CD8-positive, alpha-beta memory T cell (primary cell): ENCODE measurements at regions of chr2 and their contacts with region 1.

Region 1: DNA sequence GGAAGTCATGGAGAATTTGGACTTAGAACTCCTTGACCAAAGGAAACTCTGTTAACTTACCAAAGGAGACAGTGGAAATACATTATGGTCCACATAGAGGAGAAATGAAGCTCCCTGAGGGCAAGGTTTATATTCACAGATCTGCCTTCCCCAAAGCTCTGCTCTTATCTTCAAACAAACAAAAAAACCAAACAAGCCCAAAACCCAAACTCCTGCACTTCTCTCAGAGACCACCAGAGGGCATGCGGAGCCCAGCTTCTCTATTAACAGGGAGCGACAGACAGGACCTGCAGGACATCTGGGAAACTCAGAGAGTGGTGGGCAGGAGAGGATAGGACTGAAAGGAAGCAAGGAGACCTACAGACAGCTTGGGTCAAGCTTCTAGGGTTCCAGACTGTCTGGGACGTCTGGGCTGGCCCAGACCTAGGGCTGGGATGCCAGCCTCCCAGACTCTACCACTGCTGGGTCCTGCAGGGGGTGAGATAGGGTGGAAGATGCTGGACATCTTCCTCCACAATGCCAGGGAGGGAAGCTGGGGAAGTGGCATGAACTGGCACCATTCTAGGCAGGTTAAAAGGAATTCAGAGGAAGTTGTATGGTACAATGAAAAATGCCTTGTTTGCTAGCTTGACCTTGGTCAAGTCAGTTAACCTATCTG is 4.0 kb upstream of the WNT10A start:
- DNase-seq: peak; percentile 52 to 81 (median 70)
- H3K4me3 ChIP-seq: no peak overlapping the region
- H3K4me3 Mint-ChIP-seq: peak overlapping the region in 1 of 7 donors; percentile 35
- H3K27ac ChIP-seq: no peak overlapping the region
- H3K27ac Mint-ChIP-seq: peak overlapping the region in 5 of 8 donors; percentile 47 to 77 (median 66)
- H3K4me1 ChIP-seq: peaks cover 45% of the 10 kb centered on the region
- H3K4me1 Mint-ChIP-seq: peaks cover 34 to 51% (median 41%) of the 10 kb centered on the region in 3 donors
- H3K27me3 ChIP-seq: peaks cover 19% of the 10 kb centered on the region
- H3K27me3 Mint-ChIP-seq: peaks cover 35 to 38% of the 10 kb centered on the region in 2 donors

Region 2: DNA sequence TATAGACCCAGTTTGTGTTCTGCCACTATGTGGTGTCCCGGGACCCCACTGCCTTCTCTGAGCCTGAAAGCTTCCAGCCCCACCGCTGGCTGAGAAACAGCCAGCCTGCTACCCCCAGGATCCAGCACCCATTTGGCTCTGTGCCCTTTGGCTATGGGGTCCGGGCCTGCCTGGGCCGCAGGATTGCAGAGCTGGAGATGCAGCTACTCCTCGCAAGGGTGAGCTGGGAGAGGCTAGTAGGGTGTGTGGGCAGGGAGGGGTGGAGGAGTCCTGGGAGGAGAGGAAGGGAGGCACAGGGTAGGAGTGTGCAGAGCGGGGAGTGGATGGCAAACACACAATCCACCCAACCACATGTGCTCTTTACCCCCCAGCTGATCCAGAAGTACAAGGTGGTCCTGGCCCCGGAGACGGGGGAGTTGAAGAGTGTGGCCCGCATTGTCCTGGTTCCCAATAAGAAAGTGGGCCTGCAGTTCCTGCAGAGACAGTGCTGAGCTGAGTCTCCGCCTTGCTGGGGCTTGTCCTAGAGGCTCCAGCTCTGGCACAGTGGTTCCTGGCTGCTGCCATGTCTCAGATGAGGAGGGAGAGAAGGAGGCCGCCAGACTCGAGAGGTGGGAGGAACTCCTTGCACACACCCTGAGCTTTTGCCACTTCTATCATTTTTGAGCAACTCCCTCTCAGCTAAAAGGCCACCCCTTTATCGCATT is 62.0 kb before region 1 on chr2:
- CTCF ChIA-PET with region 1: no interaction called
- POLR2A ChIA-PET with region 1: no interaction called
- DNase-seq: no peak
- H3K4me3 ChIP-seq: no peak overlapping the region
- H3K4me3 Mint-ChIP-seq: no peak overlapping the region
- H3K27ac ChIP-seq: no peak overlapping the region
- H3K27ac Mint-ChIP-seq: peak overlapping the region in 1 of 8 donors; percentile 53
- H3K4me1 ChIP-seq: no peaks in the 10 kb centered on the region
- H3K4me1 Mint-ChIP-seq: no peaks in the 10 kb centered on the region
- H3K27me3 ChIP-seq: peaks cover 5% of the 10 kb centered on the region
- H3K27me3 Mint-ChIP-seq: peaks cover 6 to 47% of the 10 kb centered on the region in 2 donors

Region 3: DNA sequence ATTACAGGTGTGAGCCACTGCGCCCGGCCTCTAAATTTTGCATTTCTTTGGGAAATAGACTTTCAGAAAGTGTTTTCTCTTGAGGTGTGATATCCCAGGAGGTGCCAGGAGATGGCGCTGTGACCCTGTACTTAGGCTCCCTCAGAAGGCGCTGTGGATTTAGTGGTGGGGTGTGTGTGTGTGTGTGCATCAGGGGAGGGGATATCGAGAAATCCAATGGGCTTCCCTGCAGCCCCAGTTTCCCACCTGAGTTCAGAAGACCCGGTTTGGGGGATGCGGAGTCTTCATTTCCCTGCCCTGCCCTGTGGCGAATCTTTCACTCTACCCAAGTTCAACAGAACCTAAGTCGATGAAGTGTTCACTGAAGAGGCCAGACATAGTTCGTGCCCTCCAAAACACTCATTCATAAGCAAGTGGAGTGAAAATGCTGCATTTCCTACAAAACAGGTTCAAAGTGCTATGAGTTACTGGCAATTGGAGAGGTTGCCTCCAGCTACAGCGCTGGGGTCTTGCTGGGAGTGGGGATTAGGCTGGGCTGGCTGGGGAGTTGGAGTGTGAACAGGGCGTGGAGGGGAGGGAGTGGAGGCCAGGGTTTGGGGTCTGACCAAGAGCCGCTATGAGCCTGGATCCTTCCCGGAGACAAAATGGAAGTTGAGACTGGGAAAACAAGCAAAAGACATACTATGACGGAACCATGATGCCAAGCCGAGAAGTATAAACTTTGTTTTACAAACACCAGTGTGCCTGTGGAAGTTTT is 23.6 kb before region 1 on chr2:
- CTCF ChIA-PET with region 1: interaction called, 19 read pairs
- POLR2A ChIA-PET with region 1: no interaction called
- DNase-seq: peak; percentile 46 to 77 (median 54)
- H3K4me3 ChIP-seq: no peak overlapping the region
- H3K4me3 Mint-ChIP-seq: no peak overlapping the region
- H3K27ac ChIP-seq: no peak overlapping the region
- H3K27ac Mint-ChIP-seq: no peak overlapping the region
- H3K4me1 ChIP-seq: no peaks in the 10 kb centered on the region
- H3K4me1 Mint-ChIP-seq: peaks cover 0 to 10% (median 6%) of the 10 kb centered on the region in 3 donors
- H3K27me3 ChIP-seq: peaks cover 20% of the 10 kb centered on the region
- H3K27me3 Mint-ChIP-seq: peaks cover 59 to 65% of the 10 kb centered on the region in 2 donors

Region 4: GRCh38 chr2:218859556-218859987 is 17.1 kb before region 1 on chr2 and contains the start of gene WNT6:
- CTCF ChIA-PET with region 1: interaction called, 19 read pairs
- POLR2A ChIA-PET with region 1: no interaction called
- DNase-seq: no peak
- H3K4me3 ChIP-seq: no peak within 1 kb of the TSS
- H3K4me3 Mint-ChIP-seq: peak within 1 kb of the TSS in 6 of 7 donors; percentile 61 to 80 (median 74)
- H3K27ac ChIP-seq: no peak within 1 kb of the TSS
- H3K27ac Mint-ChIP-seq: peak within 1 kb of the TSS in 2 of 8 donors; percentile 36 to 58
- H3K4me1 ChIP-seq: peaks cover 18% of the 10 kb centered on the region
- H3K4me1 Mint-ChIP-seq: peaks cover 18 to 32% (median 24%) of the 10 kb centered on the region in 3 donors
- H3K27me3 ChIP-seq: peaks cover 39% of the 10 kb centered on the region
- H3K27me3 Mint-ChIP-seq: peaks cover 73 to 84% of the 10 kb centered on the region in 2 donors
- total RNA-seq, gene WNT6: 0.27 to 0.42 TPM

Region 5: DNA sequence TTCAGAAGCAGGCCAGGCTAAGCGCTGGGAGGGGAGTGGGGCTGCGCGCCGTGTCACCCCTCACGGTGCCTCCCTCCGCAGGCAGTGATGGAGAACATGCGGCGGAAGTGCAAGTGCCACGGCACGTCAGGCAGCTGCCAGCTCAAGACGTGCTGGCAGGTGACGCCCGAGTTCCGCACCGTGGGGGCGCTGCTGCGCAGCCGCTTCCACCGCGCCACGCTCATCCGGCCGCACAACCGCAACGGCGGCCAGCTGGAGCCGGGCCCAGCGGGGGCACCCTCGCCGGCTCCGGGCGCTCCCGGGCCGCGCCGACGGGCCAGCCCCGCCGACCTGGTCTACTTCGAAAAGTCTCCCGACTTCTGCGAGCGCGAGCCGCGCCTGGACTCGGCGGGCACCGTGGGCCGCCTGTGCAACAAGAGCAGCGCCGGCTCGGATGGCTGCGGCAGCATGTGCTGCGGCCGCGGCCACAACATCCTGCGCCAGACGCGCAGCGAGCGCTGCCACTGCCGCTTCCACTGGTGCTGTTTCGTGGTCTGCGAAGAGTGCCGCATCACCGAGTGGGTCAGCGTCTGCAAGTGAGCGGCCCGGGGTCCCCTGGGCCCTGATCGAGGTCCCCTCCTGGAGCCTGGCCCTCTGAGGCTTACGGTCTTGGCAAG is 16.1 kb after region 1 on chr2:
- CTCF ChIA-PET with region 1: interaction called, 1,010 read pairs
- POLR2A ChIA-PET with region 1: interaction called, 130 read pairs
- DNase-seq: peak; percentile 81 to 93 (median 93)
- H3K4me3 ChIP-seq: peak overlapping the region; percentile 57
- H3K4me3 Mint-ChIP-seq: peak overlapping the region; percentile 57 to 84 (median 75)
- H3K27ac ChIP-seq: peak overlapping the region; percentile 70
- H3K27ac Mint-ChIP-seq: peak overlapping the region; percentile 87 to 99 (median 98)
- H3K4me1 ChIP-seq: peaks cover 58% of the 10 kb centered on the region
- H3K4me1 Mint-ChIP-seq: peaks cover 44 to 64% (median 60%) of the 10 kb centered on the region in 3 donors
- H3K27me3 ChIP-seq: no peaks in the 10 kb centered on the region
- H3K27me3 Mint-ChIP-seq: peaks cover 0 to 13% of the 10 kb centered on the region in 2 donors

Region 6: GRCh38 chr2:218898109-218898878 is 21.6 kb after region 1 on chr2:
- CTCF ChIA-PET with region 1: interaction called, 1,010 read pairs
- POLR2A ChIA-PET with region 1: interaction called, 130 read pairs
- DNase-seq: peak; percentile 69 to 83 (median 74)
- H3K4me3 ChIP-seq: peak overlapping the region; percentile 58
- H3K4me3 Mint-ChIP-seq: peak overlapping the region; percentile 72 to 92 (median 81)
- H3K27ac ChIP-seq: no peak overlapping the region
- H3K27ac Mint-ChIP-seq: peak overlapping the region; percentile 77 to 97 (median 94)
- H3K4me1 ChIP-seq: peaks cover 54% of the 10 kb centered on the region
- H3K4me1 Mint-ChIP-seq: peaks cover 43 to 50% (median 44%) of the 10 kb centered on the region in 3 donors
- H3K27me3 ChIP-seq: peaks cover 9% of the 10 kb centered on the region
- H3K27me3 Mint-ChIP-seq: peaks cover 25 to 26% of the 10 kb centered on the region in 2 donors

Region 7: DNA sequence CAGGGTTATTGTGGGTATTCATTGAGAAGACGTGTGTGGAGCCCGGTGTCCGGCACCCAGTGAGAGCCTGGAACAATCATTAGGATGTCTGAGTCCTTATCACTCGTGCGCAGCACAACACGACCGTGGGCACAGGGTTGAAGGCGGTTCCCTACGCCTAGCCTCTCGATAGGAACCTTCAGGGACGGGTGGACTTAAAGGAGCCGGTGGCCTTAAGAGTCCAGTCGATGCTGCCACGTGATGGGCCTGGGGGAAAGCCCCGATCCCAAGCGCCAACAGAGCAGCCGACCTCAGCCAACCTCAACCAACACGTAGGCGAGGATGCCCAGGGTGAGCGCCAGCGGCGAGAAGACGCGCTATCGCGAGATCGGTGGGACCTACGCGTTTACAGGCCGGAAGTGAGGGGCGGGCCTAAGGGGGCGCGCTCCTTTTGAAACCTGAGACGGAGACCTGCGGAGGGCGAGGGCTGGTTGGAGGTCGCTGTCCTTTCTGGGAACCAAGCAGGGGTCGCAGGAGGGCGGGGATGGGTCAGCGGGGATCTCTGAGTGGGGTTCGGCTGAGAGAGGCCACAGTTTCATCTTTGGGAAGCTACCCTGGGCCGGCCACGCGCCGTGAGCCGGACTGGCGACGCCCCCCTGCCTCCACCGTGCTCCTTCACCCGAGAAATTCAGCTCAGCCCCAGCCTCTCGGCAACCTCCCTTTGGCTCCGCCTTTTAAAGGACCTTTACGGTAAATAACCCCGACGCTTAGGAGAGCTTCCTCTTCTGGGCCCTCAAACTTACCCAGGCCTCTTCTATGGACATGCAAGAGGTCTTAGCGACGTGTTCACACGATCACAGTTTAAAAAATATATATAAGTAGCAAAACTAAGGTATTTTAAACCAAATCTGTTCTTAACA is 32.3 kb after region 1 on chr2:
- CTCF ChIA-PET with region 1: interaction called, 1,010 read pairs
- POLR2A ChIA-PET with region 1: no interaction called
- DNase-seq: peak; percentile 83 to 93 (median 85)
- H3K4me3 ChIP-seq: peak overlapping the region; percentile 94
- H3K4me3 Mint-ChIP-seq: peak overlapping the region; percentile 73 to 93 (median 85)
- H3K27ac ChIP-seq: peak overlapping the region; percentile 38
- H3K27ac Mint-ChIP-seq: peak overlapping the region in 7 of 8 donors; percentile 62 to 92 (median 76)
- H3K4me1 ChIP-seq: peaks cover 14% of the 10 kb centered on the region
- H3K4me1 Mint-ChIP-seq: peaks cover 7 to 16% (median 15%) of the 10 kb centered on the region in 3 donors
- H3K27me3 ChIP-seq: peaks cover 10% of the 10 kb centered on the region
- H3K27me3 Mint-ChIP-seq: peaks cover 10 to 28% of the 10 kb centered on the region in 2 donors

Region 8: GRCh38 chr2:218979846-218980734 is 103.4 kb after region 1 on chr2:
- CTCF ChIA-PET with region 1: interaction called, 13 read pairs
- POLR2A ChIA-PET with region 1: no interaction called
- DNase-seq: peak; percentile 71 to 86 (median 73)
- H3K4me3 ChIP-seq: peak overlapping the region; percentile 32
- H3K4me3 Mint-ChIP-seq: peak overlapping the region; percentile 68 to 90 (median 78)
- H3K27ac ChIP-seq: no peak overlapping the region
- H3K27ac Mint-ChIP-seq: no peak overlapping the region
- H3K4me1 ChIP-seq: peaks cover 35% of the 10 kb centered on the region
- H3K4me1 Mint-ChIP-seq: peaks cover 16 to 43% (median 23%) of the 10 kb centered on the region in 3 donors
- H3K27me3 ChIP-seq: peaks cover 46% of the 10 kb centered on the region
- H3K27me3 Mint-ChIP-seq: peaks cover 48 to 77% of the 10 kb centered on the region in 2 donors